Activated CD4-positive, alpha-beta memory T cell treated with anti-CD3 and anti-CD28 coated beads, Interleukin-2, amount 10 ng/mL, durations not matched to agents 7 days and 5 days (primary cell): ENCODE measurements at regions of chr10 and their contacts with region 1.

Region 1: GRCh38 chr10:11986593-11987216 is 55.9 kb downstream of the UPF2 start:
- DNase-seq: peak; percentile 75
- H3K4me3 Mint-ChIP-seq: no peak overlapping the region
- H3K27ac Mint-ChIP-seq: no peak overlapping the region
- H3K4me1 Mint-ChIP-seq: peaks cover 2% of the 10 kb centered on the region
- H3K27me3 Mint-ChIP-seq: no peaks in the 10 kb centered on the region

Region 2: DNA sequence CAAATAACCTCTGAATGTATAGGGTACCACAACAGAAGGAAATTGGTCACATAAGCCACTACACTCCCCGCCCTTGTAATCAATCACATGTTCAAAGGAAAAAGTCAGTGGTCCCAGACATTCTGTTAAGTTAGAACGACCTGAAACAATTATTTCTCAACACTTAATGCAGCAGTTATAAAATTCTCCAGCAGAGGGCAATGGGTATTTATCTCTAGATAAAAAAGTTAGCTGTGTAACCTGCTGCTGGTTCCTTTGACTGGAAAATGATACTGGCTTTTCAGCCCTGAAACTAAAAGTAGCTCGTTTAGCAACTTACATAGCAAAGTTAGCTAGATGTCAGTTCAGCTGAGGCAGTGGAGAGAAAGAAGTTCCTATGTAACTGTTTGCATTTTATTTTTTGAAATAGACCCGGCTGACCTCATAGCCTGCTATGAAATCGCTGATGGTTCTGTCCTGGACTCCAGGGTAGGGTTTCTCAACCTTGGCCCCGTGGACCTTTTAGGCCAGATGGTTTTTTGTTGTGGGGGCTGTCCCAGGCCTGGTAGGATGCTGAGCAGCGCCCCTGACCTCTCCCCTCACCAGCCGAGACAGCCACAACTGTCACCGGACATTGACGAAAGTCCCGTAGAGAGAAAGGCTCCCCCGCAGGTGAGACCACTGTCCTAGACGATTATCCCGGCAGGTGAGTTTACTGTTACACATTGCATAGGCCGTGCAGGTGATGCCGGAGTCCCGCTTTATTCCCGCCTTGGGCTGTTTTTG is 203.7 kb before region 1 on chr10:
- CTCF ChIA-PET with region 1: interaction called, 33 read pairs
- POLR2A ChIA-PET with region 1: no interaction called
- DNase-seq: no peak
- H3K4me3 Mint-ChIP-seq: no peak overlapping the region
- H3K27ac Mint-ChIP-seq: no peak overlapping the region
- H3K4me1 Mint-ChIP-seq: peaks cover 2% of the 10 kb centered on the region
- H3K27me3 Mint-ChIP-seq: peaks cover 3% of the 10 kb centered on the region

Region 3: GRCh38 chr10:11849908-11850307 is 136.8 kb before region 1 on chr10:
- CTCF ChIA-PET with region 1: no interaction called
- POLR2A ChIA-PET with region 1: no interaction called
- DNase-seq: no peak
- H3K4me3 Mint-ChIP-seq: no peak overlapping the region
- H3K27ac Mint-ChIP-seq: no peak overlapping the region
- H3K4me1 Mint-ChIP-seq: no peaks in the 10 kb centered on the region
- H3K27me3 Mint-ChIP-seq: peaks cover 30% of the 10 kb centered on the region

Region 4: DNA sequence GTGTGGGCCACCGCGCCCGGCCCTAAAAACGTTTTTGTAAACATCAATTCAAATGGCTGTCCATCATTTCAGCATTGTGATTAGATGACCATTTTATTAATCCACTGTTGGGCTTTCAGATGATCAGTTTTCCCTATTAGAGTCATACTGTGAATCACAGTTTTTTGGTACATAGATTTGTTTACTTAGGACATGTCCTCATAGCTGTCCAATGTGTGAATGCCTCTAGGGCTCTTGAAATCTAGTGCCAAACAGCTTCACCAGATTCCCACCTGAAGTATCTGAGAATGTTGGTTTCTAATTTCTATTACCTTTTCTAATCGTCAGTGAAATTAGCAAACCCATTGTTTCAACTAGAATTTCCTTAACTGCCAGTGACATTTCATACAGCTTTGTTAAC is 10.9 kb before region 1 on chr10:
- CTCF ChIA-PET with region 1: interaction called, 10 read pairs
- POLR2A ChIA-PET with region 1: interaction called, 3 read pairs
- DNase-seq: no peak
- H3K4me3 Mint-ChIP-seq: no peak overlapping the region
- H3K27ac Mint-ChIP-seq: no peak overlapping the region
- H3K4me1 Mint-ChIP-seq: no peaks in the 10 kb centered on the region
- H3K27me3 Mint-ChIP-seq: no peaks in the 10 kb centered on the region

Region 5: DNA sequence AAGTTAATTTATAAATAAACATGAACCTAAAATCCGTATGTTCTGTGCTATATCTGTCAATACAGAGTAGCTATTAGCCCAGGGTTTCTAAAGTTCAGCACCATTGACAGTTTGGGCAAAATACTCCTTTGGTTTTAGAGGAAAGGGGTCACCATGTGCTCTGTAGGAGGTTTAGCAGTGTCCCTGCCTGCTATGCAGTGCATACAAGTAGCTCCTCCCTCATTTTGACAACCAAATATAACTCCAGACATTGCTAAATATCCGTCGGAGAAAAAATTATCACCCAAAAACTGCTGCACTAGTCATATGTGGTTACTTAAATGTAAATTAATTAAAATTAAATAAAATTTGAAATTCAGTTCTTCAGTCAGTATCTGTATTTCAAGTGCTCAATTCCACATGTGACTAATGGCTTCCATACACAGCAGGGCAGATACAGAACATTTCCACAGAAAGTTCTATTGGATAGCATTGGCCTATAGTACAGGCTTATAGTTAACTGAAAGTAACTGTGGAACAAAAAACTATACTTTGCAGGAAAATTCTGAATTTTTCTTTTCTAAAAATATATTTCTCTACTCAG is 49.5 kb after region 1 on chr10:
- CTCF ChIA-PET with region 1: no interaction called
- POLR2A ChIA-PET with region 1: no interaction called
- DNase-seq: no peak
- H3K4me3 Mint-ChIP-seq: no peak overlapping the region
- H3K27ac Mint-ChIP-seq: no peak overlapping the region
- H3K4me1 Mint-ChIP-seq: peaks cover 34% of the 10 kb centered on the region
- H3K27me3 Mint-ChIP-seq: no peaks in the 10 kb centered on the region

Region 6: GRCh38 chr10:12484941-12485805 is 498.5 kb after region 1 on chr10:
- CTCF ChIA-PET with region 1: no interaction called
- POLR2A ChIA-PET with region 1: no interaction called
- DNase-seq: peak; percentile 26
- H3K4me3 Mint-ChIP-seq: no peak overlapping the region
- H3K27ac Mint-ChIP-seq: peak overlapping the region; percentile 52
- H3K4me1 Mint-ChIP-seq: peaks cover 19% of the 10 kb centered on the region
- H3K27me3 Mint-ChIP-seq: no peaks in the 10 kb centered on the region